Naive thymus-derived CD4-positive, alpha-beta T cell (primary cell): ENCODE measurements at regions of chr14 and their contacts with region 1.

Region 1: DNA sequence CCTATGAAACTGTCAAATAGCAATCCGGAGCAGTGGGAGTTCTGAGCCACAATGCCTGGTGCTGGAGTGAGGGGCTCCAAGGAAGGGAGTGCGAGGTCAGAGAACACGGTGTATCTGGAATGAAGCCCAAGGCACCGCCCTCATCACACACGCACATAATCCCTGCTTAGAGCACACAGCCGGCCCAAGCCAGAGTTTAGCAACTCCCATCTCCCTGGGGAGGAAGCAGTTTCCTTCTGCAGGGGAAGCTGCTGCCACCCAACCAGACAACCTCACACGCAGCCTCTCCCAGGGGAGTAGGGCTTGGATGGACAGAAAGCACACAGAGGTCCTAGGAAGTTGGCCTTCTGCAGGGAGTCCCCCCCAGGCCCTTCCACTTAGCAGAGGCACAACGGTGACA is 31.3 kb downstream of the ACTN1 start:
- DNase-seq: no peak
- ATAC-seq: no peak
- H3K4me3 ChIP-seq: no peak overlapping the region
- H3K4me3 Mint-ChIP-seq: peak overlapping the region in 8 of 10 donors; percentile 56 to 83 (median 74)
- H3K27ac ChIP-seq: peak overlapping the region; percentile 46
- H3K27ac Mint-ChIP-seq: peak overlapping the region in 8 of 9 donors; percentile 88 to 99 (median 93)
- H3K4me1 ChIP-seq: peaks cover 0 to 73% of the 10 kb centered on the region in 2 donors
- H3K4me1 Mint-ChIP-seq: peaks cover 31 to 97% (median 92%) of the 10 kb centered on the region in 7 donors
- H3K27me3 ChIP-seq: no peaks in the 10 kb centered on the region
- H3K27me3 Mint-ChIP-seq: no peaks in the 10 kb centered on the region

Region 2: GRCh38 chr14:68598621-68599447 is 349.0 kb before region 1 on chr14:
- CTCF ChIA-PET with region 1: no interaction called
- POLR2A ChIA-PET with region 1: no interaction called
- intact Hi-C with region 1: no loop called
- DNase-seq: no peak
- ATAC-seq: peak; percentile 85
- H3K4me3 ChIP-seq: no peak overlapping the region
- H3K4me3 Mint-ChIP-seq: no peak overlapping the region
- H3K27ac ChIP-seq: no peak overlapping the region
- H3K27ac Mint-ChIP-seq: no peak overlapping the region
- H3K4me1 ChIP-seq: peaks cover 0 to 11% of the 10 kb centered on the region in 2 donors
- H3K4me1 Mint-ChIP-seq: peaks cover 7 to 18% (median 12%) of the 10 kb centered on the region in 7 donors
- H3K27me3 ChIP-seq: no peaks in the 10 kb centered on the region
- H3K27me3 Mint-ChIP-seq: no peaks in the 10 kb centered on the region

Region 3: GRCh38 chr14:68926236-68926635 is 21.6 kb before region 1 on chr14:
- CTCF ChIA-PET with region 1: interaction called, 5 read pairs
- POLR2A ChIA-PET with region 1: interaction called, 3 read pairs
- intact Hi-C with region 1: loop called in 1 of 2 experiments (anchors 2 kb)
- DNase-seq: peak in 3 of 9 donors; percentile 22 to 30 (median 29)
- ATAC-seq: no peak
- H3K4me3 ChIP-seq: no peak overlapping the region
- H3K4me3 Mint-ChIP-seq: peak overlapping the region in 4 of 10 donors; percentile 15 to 82 (median 30)
- H3K27ac ChIP-seq: no peak overlapping the region
- H3K27ac Mint-ChIP-seq: peak overlapping the region in 8 of 9 donors; percentile 86 to 97 (median 90)
- H3K4me1 ChIP-seq: peaks cover 0 to 72% of the 10 kb centered on the region in 2 donors
- H3K4me1 Mint-ChIP-seq: peaks cover 40 to 96% (median 87%) of the 10 kb centered on the region in 7 donors
- H3K27me3 ChIP-seq: no peaks in the 10 kb centered on the region
- H3K27me3 Mint-ChIP-seq: no peaks in the 10 kb centered on the region

Region 4: GRCh38 chr14:68961781-68962584 is 14.2 kb after region 1 on chr14:
- CTCF ChIA-PET with region 1: interaction called, 4 read pairs
- POLR2A ChIA-PET with region 1: interaction called, 21 read pairs
- intact Hi-C with region 1: loop called in 1 of 2 experiments (anchors 1 kb)
- DNase-seq: no peak
- ATAC-seq: no peak
- H3K4me3 ChIP-seq: no peak overlapping the region
- H3K4me3 Mint-ChIP-seq: peak overlapping the region in 8 of 10 donors; percentile 29 to 96 (median 48)
- H3K27ac ChIP-seq: no peak overlapping the region
- H3K27ac Mint-ChIP-seq: peak overlapping the region in 8 of 9 donors; percentile 84 to 100 (median 92)
- H3K4me1 ChIP-seq: peaks cover 0 to 94% of the 10 kb centered on the region in 2 donors
- H3K4me1 Mint-ChIP-seq: peaks cover 23 to 100% (median 93%) of the 10 kb centered on the region in 7 donors
- H3K27me3 ChIP-seq: no peaks in the 10 kb centered on the region
- H3K27me3 Mint-ChIP-seq: no peaks in the 10 kb centered on the region

Region 5: GRCh38 chr14:68970038-68970612 is 22.3 kb after region 1 on chr14:
- CTCF ChIA-PET with region 1: no interaction called
- POLR2A ChIA-PET with region 1: interaction called, 18 read pairs
- intact Hi-C with region 1: loop called in 1 of 2 experiments (anchors 1 kb)
- DNase-seq: peak in 7 of 9 donors; percentile 81 to 94 (median 91)
- ATAC-seq: peak; percentile 77
- H3K4me3 ChIP-seq: peak overlapping the region; percentile 46
- H3K4me3 Mint-ChIP-seq: peak overlapping the region; percentile 43 to 96 (median 90)
- H3K27ac ChIP-seq: peak overlapping the region; percentile 89
- H3K27ac Mint-ChIP-seq: peak overlapping the region; percentile 85 to 100 (median 99)
- H3K4me1 ChIP-seq: peaks cover 27 to 79% of the 10 kb centered on the region in 2 donors
- H3K4me1 Mint-ChIP-seq: peaks cover 57 to 100% (median 90%) of the 10 kb centered on the region in 7 donors
- H3K27me3 ChIP-seq: no peaks in the 10 kb centered on the region
- H3K27me3 Mint-ChIP-seq: no peaks in the 10 kb centered on the region

Region 6: DNA sequence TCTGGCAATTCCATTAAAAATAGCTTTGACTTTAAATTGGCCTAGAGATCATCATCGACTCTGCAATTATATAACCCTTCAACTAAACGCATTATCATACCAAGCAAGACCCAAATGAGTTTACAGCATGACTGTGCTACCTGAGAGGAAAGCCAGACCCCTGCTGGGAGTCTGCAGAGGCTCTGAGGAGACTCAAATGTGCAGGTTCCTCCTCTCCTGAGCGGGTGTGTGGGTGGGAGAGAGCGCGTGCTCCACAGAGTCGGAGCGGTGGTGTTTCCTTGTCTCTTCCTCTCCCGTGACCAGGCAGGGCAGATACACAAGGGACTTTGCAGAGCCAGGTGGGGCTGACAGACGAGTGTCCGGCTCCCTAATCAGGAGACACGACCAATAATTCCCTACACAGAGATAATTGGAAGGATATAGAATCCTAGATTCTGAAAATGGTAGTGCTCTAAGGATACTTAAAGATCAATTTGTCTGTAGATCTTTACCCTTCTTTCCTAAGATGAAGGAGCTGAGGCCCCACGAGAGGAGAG is 1166.9 kb after region 1 on chr14:
- CTCF ChIA-PET with region 1: no interaction called
- POLR2A ChIA-PET with region 1: no interaction called
- intact Hi-C with region 1: no loop called
- DNase-seq: no peak
- ATAC-seq: no peak
- H3K4me3 ChIP-seq: no peak overlapping the region
- H3K4me3 Mint-ChIP-seq: no peak overlapping the region
- H3K27ac ChIP-seq: no peak overlapping the region
- H3K27ac Mint-ChIP-seq: no peak overlapping the region
- H3K4me1 ChIP-seq: no peaks in the 10 kb centered on the region
- H3K4me1 Mint-ChIP-seq: peaks cover 0 to 1% (median 0%) of the 10 kb centered on the region in 7 donors
- H3K27me3 ChIP-seq: no peaks in the 10 kb centered on the region
- H3K27me3 Mint-ChIP-seq: peaks cover 9 to 34% (median 21%) of the 10 kb centered on the region in 5 donors